RWPE1 (cell line): ENCODE measurements at regions of chr1 and their contacts with region 1.

Region 1: DNA sequence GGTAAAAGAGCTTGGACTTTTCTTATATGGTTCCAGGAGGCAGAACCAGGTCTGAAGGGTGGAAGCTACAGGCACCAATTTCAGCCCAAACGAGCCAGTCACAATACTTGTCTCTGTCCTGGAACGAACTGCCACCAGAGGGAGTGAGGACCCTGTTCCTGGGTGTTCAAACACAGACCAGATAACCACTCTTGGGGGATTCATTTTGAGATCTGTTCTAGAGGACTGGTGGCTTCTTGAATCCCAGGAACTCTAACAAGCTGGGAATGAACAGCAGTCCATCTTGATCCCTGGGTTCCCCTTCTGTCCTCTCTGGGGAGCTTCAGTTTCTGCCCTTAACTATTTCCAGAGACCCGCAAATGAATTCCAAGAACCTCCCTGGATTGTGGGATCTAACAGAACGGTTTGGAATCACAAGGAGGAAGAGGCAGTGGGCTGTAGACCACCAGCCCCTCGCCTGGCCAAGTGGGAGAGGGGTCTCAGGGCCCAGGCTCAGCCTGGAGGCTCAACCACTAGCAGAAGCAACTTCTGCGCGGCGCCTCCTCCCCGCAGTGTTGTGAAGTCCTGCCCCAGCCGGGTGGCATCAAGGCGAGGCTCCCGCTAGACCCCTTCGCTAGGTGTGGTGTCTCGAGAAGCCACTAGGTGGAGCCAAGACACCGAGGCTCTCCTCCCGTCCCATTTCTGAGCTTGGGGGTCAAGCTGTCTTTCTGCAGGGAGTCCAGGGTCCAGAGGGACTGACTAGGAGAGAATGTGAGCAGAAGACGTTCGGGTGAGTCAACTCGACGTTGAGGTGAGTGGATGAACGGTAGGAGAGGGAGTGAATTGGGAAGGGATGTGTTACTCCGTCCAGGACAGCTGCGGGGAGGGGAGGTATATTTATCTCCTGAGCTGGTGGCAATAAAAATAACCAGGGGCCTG is 12.1 kb upstream of the NES start:
- DNase-seq: peak; percentile 83
- H3K27ac ChIP-seq: peak overlapping the region; percentile 82
- CTCF ChIP-seq: peak; percentile 88

Region 2: GRCh38 chr1:156581661-156582387 is 107.5 kb before region 1 on chr1:
- CTCF ChIA-PET with region 1: no interaction called
- POLR2A ChIA-PET with region 1: no interaction called
- DNase-seq: no peak
- H3K27ac ChIP-seq: no peak overlapping the region
- CTCF ChIP-seq: no peak

Region 3: GRCh38 chr1:156705918-156706656 is 16.8 kb after region 1 on chr1:
- CTCF ChIA-PET with region 1: interaction called, 225 read pairs
- POLR2A ChIA-PET with region 1: interaction called, 5 read pairs
- DNase-seq: no peak
- H3K27ac ChIP-seq: peak overlapping the region; percentile 95
- CTCF ChIP-seq: peak; percentile 87

Region 4: GRCh38 chr1:156721535-156721934 is 32.2 kb after region 1 on chr1:
- CTCF ChIA-PET with region 1: interaction called, 225 read pairs
- POLR2A ChIA-PET with region 1: interaction called, 10 read pairs
- DNase-seq: no peak
- H3K27ac ChIP-seq: peak overlapping the region; percentile 44
- CTCF ChIP-seq: no peak